ENCODE measurements at regions of chr9 and their contacts with region 1.

Region 1: GRCh38 chr9:73081979-73082657 is 69.5 kb upstream of the ANXA1 start:
- DNase-seq: no peak
- H3K4me3 ChIP-seq: no peak overlapping the region
- H3K27ac ChIP-seq: no peak overlapping the region
- H3K4me1 ChIP-seq: peaks cover 22% of the 10 kb centered on the region
- H3K27me3 ChIP-seq: no peaks in the 10 kb centered on the region
- CTCF ChIP-seq: peak; percentile 78

Region 2: GRCh38 chr9:72280913-72281500 is 801.1 kb before region 1 on chr9:
- CTCF ChIA-PET with region 1: no interaction called
- POLR2A ChIA-PET with region 1: interaction called, 3 read pairs
- intact Hi-C with region 1: loop called (anchors 1 kb)
- DNase-seq: peak; percentile 46 to 72
- H3K4me3 ChIP-seq: no peak overlapping the region
- H3K27ac ChIP-seq: no peak overlapping the region
- H3K4me1 ChIP-seq: no peaks in the 10 kb centered on the region
- H3K27me3 ChIP-seq: no peaks in the 10 kb centered on the region
- CTCF ChIP-seq: peak; percentile 96

Region 3: GRCh38 chr9:72871685-72872084 is 210.4 kb before region 1 on chr9:
- CTCF ChIA-PET with region 1: interaction called, 5 read pairs
- POLR2A ChIA-PET with region 1: no interaction called
- intact Hi-C with region 1: loop called (anchors 2 kb)
- DNase-seq: no peak
- H3K4me3 ChIP-seq: no peak overlapping the region
- H3K27ac ChIP-seq: no peak overlapping the region
- H3K4me1 ChIP-seq: no peaks in the 10 kb centered on the region
- H3K27me3 ChIP-seq: no peaks in the 10 kb centered on the region
- CTCF ChIP-seq: peak; percentile 73

Region 4: DNA sequence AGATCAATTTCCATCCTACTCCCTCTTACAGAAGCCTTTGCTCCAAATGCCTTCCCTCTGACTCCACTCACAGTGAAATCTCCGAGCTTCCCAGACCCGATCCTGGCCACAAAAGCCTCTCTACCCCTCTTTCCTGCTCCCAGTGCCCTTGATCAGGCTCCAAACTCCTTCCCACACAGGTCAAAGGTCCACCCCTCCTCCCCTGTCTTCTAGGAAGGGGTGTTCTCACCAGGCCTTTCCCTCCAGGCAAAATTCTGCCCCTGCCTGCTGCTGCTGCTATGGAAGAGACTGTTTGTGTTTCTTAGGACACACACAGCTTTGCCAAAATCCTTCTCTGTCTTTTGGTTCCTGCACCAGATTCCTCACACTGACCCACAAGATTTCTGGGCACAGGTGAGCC is 43.5 kb before region 1 on chr9:
- CTCF ChIA-PET with region 1: no interaction called
- POLR2A ChIA-PET with region 1: interaction called, 3 read pairs
- intact Hi-C with region 1: loop called (anchors 2 kb)
- DNase-seq: peak; percentile 53 to 57
- H3K4me3 ChIP-seq: no peak overlapping the region
- H3K27ac ChIP-seq: no peak overlapping the region
- H3K4me1 ChIP-seq: peaks cover 30% of the 10 kb centered on the region
- H3K27me3 ChIP-seq: no peaks in the 10 kb centered on the region
- CTCF ChIP-seq: no peak

Measured in PC-9 (cell line).